AG04450 (cell line): ENCODE measurements at regions of chr10 and their contacts with region 1.

Region 1: DNA sequence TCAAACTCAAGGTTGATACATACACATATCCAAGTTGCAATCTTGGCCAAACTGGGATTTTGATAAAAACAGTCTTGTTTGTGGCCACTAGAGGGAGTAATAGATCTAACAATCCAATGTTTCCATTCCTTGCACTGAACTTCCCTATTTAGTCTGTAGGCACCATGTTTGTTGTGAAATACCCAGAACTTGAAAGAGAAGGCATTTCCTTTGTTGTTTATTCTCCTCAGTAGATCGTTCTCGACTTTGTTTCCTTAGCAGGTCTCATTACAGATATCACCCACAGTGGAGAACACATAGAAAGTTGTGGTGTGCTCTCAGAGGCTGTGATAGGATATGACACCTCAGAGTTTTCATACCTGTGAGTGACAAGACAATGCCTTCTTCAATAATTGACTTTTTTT is 70.3 kb upstream of the MXI1 start:
- DNase-seq: peak; percentile 48
- H3K4me3 ChIP-seq: no peak overlapping the region
- H3K27ac ChIP-seq: no peak overlapping the region
- H3K27me3 ChIP-seq: no peaks in the 10 kb centered on the region
- CTCF ChIP-seq: peak; percentile 76

Region 2: DNA sequence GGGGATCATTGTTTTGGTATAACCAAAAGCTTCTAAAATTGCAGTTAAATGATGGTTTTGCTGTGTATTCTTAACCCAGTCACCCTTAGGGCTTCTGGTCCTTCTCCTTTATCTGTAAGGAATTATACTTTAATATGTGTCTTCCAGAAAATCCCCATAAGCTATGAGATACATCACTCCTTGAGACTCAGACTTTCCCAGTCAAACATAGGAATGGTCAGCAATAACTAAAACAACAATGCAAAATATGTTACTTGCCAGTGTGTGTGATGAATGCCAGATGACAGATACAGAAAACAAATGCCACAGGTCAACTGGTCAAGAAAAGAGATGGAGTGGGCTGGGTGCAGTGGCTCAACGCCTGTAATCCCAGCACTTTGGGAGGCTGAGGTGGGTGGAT is 119.2 kb before region 1 on chr10:
- CTCF ChIA-PET with region 1: no interaction called
- POLR2A ChIA-PET with region 1: no interaction called
- DNase-seq: no peak
- H3K4me3 ChIP-seq: no peak overlapping the region
- H3K27ac ChIP-seq: no peak overlapping the region
- H3K27me3 ChIP-seq: no peaks in the 10 kb centered on the region
- CTCF ChIP-seq: no peak

Region 3: DNA sequence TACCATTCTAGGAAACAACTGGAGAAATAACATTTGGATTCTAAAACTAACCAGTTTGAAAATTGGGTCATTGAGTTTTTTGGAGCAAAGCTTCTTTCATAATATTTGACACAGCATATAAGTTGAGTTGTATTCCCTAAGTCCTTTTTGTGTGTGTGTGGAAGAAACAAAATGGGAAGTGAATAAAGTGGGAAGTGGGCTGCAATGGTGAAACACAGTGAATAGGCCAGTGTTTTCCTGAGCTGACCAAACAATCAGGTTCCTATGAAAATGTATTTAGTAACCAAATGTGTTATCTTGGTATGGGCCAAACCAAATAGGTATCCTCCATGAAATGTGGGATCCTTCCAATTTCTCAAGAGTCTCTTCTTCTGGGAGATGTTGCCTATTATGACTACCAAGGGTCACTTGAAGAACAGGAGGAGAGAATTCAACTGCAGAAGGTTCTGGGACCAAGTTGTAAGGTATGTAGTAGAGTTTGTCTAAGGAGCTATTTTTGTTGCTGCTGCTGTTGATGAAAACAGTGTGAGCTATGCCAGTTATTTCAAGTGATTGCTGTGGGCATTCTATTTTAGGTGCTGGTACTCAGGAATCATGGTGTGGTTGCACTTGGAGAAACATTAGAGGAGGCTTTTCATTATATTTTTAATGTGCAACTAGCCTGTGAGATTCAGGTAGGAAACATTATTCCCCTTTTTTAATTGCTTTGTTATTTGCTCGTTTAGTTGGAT is 18.1 kb before region 1 on chr10:
- CTCF ChIA-PET with region 1: interaction called, 13 read pairs
- POLR2A ChIA-PET with region 1: no interaction called
- DNase-seq: no peak
- H3K4me3 ChIP-seq: no peak overlapping the region
- H3K27ac ChIP-seq: no peak overlapping the region
- H3K27me3 ChIP-seq: no peaks in the 10 kb centered on the region
- CTCF ChIP-seq: no peak

Region 4: GRCh38 chr10:110210674-110211464 is 73.7 kb after region 1 on chr10:
- CTCF ChIA-PET with region 1: interaction called, 27 read pairs
- POLR2A ChIA-PET with region 1: interaction called, 8 read pairs
- DNase-seq: peak; percentile 94
- H3K4me3 ChIP-seq: peak overlapping the region; percentile 78
- H3K27ac ChIP-seq: peak overlapping the region; percentile 91
- H3K27me3 ChIP-seq: peaks cover 2% of the 10 kb centered on the region
- CTCF ChIP-seq: no peak

Region 5: GRCh38 chr10:110260746-110261477 is 123.8 kb after region 1 on chr10:
- CTCF ChIA-PET with region 1: interaction called, 10 read pairs
- POLR2A ChIA-PET with region 1: no interaction called
- DNase-seq: no peak
- H3K4me3 ChIP-seq: no peak overlapping the region
- H3K27ac ChIP-seq: no peak overlapping the region
- H3K27me3 ChIP-seq: no peaks in the 10 kb centered on the region
- CTCF ChIP-seq: no peak

Region 6: GRCh38 chr10:110279407-110279986 is 142.4 kb after region 1 on chr10:
- CTCF ChIA-PET with region 1: interaction called, 265 read pairs
- POLR2A ChIA-PET with region 1: no interaction called
- DNase-seq: peak; percentile 43
- H3K4me3 ChIP-seq: no peak overlapping the region
- H3K27ac ChIP-seq: no peak overlapping the region
- H3K27me3 ChIP-seq: no peaks in the 10 kb centered on the region
- CTCF ChIP-seq: peak; percentile 80

Region 7: GRCh38 chr10:110296966-110297365 is 159.8 kb after region 1 on chr10:
- CTCF ChIA-PET with region 1: interaction called, 13 read pairs
- POLR2A ChIA-PET with region 1: no interaction called
- DNase-seq: no peak
- H3K4me3 ChIP-seq: no peak overlapping the region
- H3K27ac ChIP-seq: no peak overlapping the region
- H3K27me3 ChIP-seq: no peaks in the 10 kb centered on the region
- CTCF ChIP-seq: no peak

Region 8: GRCh38 chr10:110664483-110665420 is 527.6 kb after region 1 on chr10:
- CTCF ChIA-PET with region 1: no interaction called
- POLR2A ChIA-PET with region 1: no interaction called
- DNase-seq: peak; percentile 85
- H3K4me3 ChIP-seq: no peak overlapping the region
- H3K27ac ChIP-seq: peak overlapping the region; percentile 53
- H3K27me3 ChIP-seq: no peaks in the 10 kb centered on the region
- CTCF ChIP-seq: no peak